Activated CD4-positive, alpha-beta T cell treated with anti-CD3 and anti-CD28 coated beads, Interleukin-2, amount 10 ng/mL, durations not matched to agents 24 days and 14 days (primary cell): ENCODE measurements at regions of chr15 and their contacts with region 1.

Region 1: DNA sequence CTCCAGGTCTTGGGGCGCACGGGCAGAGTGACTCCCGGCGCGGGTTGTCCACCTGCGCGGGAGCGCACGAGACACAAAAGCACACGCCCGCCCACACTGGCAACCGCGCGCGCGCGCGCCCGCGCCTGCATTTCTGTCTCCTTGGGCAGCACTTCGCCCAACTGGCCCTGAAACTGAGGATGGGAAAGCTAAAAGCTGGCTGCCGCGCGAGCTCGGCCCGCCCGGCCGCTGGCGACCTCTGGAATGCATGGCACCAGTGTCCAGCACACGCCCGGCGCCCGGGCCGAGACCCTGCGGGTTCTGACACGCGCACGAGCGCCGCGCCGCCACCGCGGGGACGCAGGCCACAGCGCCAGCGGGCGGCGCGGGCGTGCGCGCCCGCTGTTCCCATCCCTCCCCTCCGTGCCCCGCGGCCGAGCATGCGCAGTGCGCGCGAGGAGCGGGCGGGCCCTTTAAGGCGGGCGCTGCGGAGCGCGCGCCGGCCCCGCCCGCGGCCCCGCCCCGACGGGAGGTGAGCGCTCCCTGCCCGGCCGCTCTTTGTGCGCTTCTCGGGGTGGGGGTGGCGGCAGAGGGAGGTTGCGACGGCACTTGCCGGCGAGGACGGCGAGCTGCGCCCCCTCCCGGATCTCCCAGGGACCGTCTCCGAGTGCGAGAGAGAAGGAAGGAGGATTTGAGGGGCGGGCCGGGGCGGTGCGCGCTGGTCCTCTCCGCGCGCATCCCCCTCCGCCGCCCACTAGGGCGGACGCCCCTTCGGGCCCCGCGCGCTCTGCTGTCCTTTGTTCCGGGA is 1.0 kb upstream of the MEX3B start:
- DNase-seq: peak; percentile 96
- H3K4me3 Mint-ChIP-seq: peak overlapping the region; percentile 91
- H3K27ac Mint-ChIP-seq: peak overlapping the region; percentile 89
- H3K4me1 Mint-ChIP-seq: peaks cover 17% of the 10 kb centered on the region
- H3K27me3 Mint-ChIP-seq: peaks cover 32% of the 10 kb centered on the region

Region 2: DNA sequence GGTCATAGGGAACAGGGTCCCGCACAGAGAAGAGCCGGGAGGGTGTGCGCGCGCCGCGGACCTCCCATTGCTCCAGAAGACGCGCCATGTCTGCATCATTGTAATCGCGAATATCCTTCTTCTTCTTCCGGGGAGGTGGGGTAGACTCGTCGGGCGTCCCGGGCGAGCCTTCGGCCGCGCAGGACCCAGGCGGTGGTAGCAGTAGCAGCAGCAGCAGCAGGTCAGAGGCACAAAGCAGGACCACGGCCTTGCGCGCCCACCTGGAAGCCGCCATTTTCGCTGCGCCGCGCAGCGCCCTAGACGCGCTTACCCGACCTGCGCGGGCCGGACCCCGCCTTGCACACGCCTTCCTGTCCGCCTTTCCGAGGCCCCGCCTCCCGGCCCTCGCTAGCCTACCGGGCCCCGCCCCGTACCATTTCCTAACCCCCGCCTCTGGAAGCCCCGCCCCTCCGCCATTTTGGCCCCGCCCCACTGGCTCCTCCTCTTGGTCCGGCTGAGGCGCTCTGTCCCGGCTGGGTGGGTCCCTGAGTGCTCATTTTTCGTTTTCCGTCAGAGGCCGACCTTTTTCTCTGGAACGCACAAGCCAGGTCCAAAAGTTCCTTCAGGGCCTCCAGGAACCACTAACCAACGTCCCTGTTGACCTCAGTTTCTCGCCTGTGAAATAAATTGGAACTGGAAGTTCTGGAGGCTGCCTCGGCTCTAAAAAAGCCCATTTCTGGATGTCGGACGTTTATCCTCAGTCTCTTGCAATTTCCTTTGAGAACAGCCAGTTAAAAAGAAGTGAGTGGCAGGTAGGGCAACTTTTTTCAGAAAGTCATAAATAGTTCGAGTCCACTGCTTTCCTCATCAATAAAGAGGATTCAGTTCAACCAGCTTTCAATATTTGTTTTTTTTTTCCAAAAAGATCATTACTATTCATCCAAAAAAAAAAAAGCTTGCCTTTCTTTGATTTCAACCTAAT is 1057.1 kb before region 1 on chr15 and contains the start of gene MESD:
- intact Hi-C with region 1: loop called (anchors 10 kb)
- DNase-seq: peak; percentile 98
- H3K4me3 Mint-ChIP-seq: peak within 1 kb of the TSS; percentile 98
- H3K27ac Mint-ChIP-seq: peak within 1 kb of the TSS; percentile 96
- H3K4me1 Mint-ChIP-seq: peaks cover 50% of the 10 kb centered on the region
- H3K27me3 Mint-ChIP-seq: no peaks in the 10 kb centered on the region
- total RNA-seq, gene MESD: 27.1 and 27.6 TPM in 2 replicates

Region 3: DNA sequence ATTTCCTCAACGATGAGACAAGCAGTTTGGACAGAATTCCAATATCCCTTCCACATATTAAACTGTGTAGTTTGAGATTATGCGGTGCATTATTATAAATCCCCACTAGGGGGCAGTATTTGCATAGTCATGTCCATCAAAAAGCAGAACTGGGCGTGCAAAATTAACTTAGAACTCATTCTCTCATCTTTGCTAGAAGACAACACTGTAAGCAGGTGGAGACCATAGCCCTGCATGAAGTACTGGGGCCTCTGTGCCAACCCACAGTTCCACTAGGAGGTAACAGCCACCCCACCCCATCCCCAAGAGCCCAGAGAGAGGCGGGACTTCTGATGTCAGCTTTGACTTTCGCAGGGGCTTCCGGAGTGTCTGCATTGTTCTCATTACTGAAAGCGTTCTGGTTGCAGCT is 566.2 kb before region 1 on chr15:
- intact Hi-C with region 1: loop called (anchors 5 kb)
- DNase-seq: peak; percentile 81
- H3K4me3 Mint-ChIP-seq: no peak overlapping the region
- H3K27ac Mint-ChIP-seq: no peak overlapping the region
- H3K4me1 Mint-ChIP-seq: no peaks in the 10 kb centered on the region
- H3K27me3 Mint-ChIP-seq: peaks cover 5% of the 10 kb centered on the region

Region 4: DNA sequence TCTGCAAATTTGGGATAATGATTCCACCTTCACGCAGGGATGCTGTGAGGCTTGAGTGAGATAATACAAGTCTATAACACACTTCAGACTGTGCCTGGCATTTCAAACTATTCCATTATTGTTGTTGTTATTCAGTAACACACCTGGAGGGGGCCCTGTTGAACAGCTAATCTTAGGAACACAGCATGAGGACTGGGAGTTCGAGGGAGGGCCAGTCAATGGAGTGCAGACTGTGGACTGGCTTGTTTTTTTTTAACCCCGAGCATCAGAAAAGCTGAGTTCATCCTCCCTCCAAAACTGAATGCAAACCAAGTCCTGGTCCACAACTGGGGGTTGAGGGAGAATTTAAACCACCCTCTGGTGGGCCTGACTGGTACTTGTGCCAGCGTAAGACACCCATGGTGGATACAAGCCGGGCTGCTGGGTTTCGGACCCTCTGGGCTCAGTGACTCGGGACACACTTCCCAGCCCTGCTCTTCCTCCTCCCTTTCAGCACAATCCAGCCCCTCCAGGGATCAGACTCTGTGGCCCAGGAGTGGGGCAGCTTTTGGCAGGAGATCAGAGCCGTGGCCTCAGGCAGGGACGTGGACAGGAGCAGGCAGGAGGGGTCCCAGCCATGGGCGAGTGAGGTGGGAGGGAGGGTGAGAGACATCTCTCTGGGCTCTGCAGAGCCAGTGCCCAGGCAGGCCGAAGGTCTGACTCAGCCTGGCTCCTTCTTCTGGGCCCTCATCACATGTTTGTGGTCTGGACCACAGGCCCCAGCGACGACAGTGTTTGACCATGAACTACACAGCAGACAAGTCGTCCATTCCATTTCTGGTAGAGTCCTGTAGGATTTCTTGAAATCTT is 35.3 kb after region 1 on chr15:
- intact Hi-C with region 1: no loop called
- DNase-seq: no peak
- H3K4me3 Mint-ChIP-seq: no peak overlapping the region
- H3K27ac Mint-ChIP-seq: no peak overlapping the region
- H3K4me1 Mint-ChIP-seq: no peaks in the 10 kb centered on the region
- H3K27me3 Mint-ChIP-seq: peaks cover 6% of the 10 kb centered on the region

Region 5: DNA sequence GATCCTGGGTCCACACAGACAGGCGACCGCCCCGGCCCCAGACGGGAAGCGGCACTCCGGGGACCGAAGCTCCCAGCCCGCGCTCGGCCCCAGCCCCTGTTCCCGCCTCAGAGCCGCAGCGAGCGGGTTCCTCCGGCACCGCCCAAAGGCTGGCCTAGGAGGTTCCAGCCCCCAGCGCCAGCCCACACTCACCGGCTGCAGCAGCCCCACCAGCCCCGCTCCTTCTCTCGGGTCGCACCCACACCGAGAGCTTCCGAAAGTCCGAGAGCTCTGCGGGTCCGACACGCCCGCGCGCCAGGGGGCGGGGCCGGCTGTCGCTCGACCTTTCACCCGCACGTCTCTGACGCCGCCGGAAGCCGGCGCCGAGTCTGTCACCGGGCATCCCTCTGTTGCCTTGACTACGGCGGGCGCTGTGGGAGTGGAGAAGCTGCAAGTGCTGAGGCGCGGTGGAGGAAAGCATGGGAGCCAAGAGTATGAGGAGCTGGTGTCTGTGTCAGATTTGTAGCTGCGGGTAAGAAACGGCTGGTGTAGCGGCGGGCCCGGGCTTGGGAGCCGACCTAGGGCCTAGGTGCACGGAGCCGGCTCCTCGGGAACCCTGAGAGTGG is 215.7 kb after region 1 on chr15 and contains the starts of genes EFL1 and SAXO2:
- intact Hi-C with region 1: loop called (anchors 1 kb)
- DNase-seq: peak; percentile 98
- H3K4me3 Mint-ChIP-seq: peak within 1 kb of the TSS; percentile 96
- H3K27ac Mint-ChIP-seq: peak within 1 kb of the TSS; percentile 92
- H3K4me1 Mint-ChIP-seq: peaks cover 28% of the 10 kb centered on the region
- H3K27me3 Mint-ChIP-seq: peaks cover 5% of the 10 kb centered on the region
- total RNA-seq, gene EFL1: 23.7 and 27.2 TPM in 2 replicates
- total RNA-seq, gene SAXO2: 1.1 and 1.8 TPM in 2 replicates